Caco-2 (cell line): ENCODE measurements at regions of chr13 and their contacts with region 1.

Region 1: GRCh38 chr13:26946684-26947343 is 186.2 kb upstream of the GPR12 start:
- DNase-seq: peak; percentile 32 to 69
- H3K4me3 ChIP-seq: no peak overlapping the region
- H3K4me3 Mint-ChIP-seq: no peak overlapping the region
- H3K27ac Mint-ChIP-seq: no peak overlapping the region
- H3K4me1 ChIP-seq: peaks cover 48% of the 10 kb centered on the region
- H3K4me1 Mint-ChIP-seq: peaks cover 34% of the 10 kb centered on the region
- H3K27me3 ChIP-seq: no peaks in the 10 kb centered on the region
- H3K27me3 Mint-ChIP-seq: no peaks in the 10 kb centered on the region
- CTCF ChIP-seq: peak; percentile 87 to 97

Region 2: GRCh38 chr13:25744178-25744577 is 1202.6 kb before region 1 on chr13:
- CTCF ChIA-PET with region 1: no interaction called
- POLR2A ChIA-PET with region 1: no interaction called
- intact Hi-C with region 1: no loop called
- DNase-seq: no peak
- H3K4me3 ChIP-seq: no peak overlapping the region
- H3K4me3 Mint-ChIP-seq: no peak overlapping the region
- H3K27ac Mint-ChIP-seq: no peak overlapping the region
- H3K4me1 ChIP-seq: no peaks in the 10 kb centered on the region
- H3K4me1 Mint-ChIP-seq: no peaks in the 10 kb centered on the region
- H3K27me3 ChIP-seq: no peaks in the 10 kb centered on the region; the same call in 1 of the 2 replicates
- H3K27me3 Mint-ChIP-seq: peaks cover 36% of the 10 kb centered on the region
- CTCF ChIP-seq: no peak

Region 3: GRCh38 chr13:26957182-26957581 is 10.4 kb after region 1 on chr13:
- CTCF ChIA-PET with region 1: interaction called, 32 read pairs
- POLR2A ChIA-PET with region 1: interaction called, 13 read pairs
- intact Hi-C with region 1: loop called (anchors 1 kb)
- DNase-seq: peak; percentile 72 to 76
- H3K4me3 ChIP-seq: no peak overlapping the region
- H3K4me3 Mint-ChIP-seq: peak overlapping the region; percentile 38
- H3K27ac Mint-ChIP-seq: peak overlapping the region; percentile 90
- H3K4me1 ChIP-seq: peaks cover 91% of the 10 kb centered on the region
- H3K4me1 Mint-ChIP-seq: peaks cover 56% of the 10 kb centered on the region
- H3K27me3 ChIP-seq: no peaks in the 10 kb centered on the region
- H3K27me3 Mint-ChIP-seq: no peaks in the 10 kb centered on the region
- CTCF ChIP-seq: no peak

Region 4: DNA sequence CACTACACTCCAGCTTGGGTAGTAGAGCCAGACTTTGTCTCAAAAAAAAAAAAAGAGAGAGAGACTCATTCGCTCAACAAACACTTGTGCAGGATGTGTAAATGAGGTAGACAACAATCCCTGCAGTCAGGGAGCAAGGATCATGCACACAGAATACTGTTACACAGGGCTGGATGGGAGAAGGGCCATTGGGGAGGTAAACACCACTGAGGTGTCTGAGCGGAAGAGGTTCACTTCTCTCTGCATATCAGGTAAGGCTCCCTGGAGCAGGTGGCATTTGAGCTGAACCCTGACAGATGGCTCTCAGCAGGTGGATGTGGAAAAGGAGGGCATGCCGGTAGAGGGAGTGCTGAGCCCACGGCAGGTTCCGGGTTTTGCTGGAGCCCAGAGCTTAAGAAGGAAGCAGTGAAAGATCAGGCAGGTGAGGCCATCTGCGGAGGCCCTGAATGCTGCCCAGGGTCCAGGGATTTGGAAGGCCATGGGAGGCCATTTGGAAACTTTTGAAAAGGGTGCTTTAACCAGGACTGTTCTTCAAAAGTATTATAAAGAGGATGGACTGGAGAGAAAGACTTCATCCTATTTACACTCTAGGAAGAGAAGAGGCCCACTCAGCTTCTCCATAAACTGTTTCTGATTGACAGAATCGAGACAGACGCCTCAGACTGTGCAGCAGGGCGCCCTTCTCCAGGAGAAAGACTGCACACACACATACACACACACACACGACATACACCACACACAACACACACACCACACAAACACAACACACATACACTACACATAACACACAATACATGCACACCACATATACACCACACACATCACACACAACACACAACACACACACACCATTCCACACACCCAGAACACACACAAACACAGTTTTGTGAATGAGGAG is 25.4 kb after region 1 on chr13:
- CTCF ChIA-PET with region 1: interaction called, 20 read pairs
- POLR2A ChIA-PET with region 1: interaction called, 7 read pairs
- intact Hi-C with region 1: loop called (anchors 1 kb)
- DNase-seq: peak; percentile 76 to 81
- H3K4me3 ChIP-seq: no peak overlapping the region
- H3K4me3 Mint-ChIP-seq: peak overlapping the region; percentile 5
- H3K27ac Mint-ChIP-seq: peak overlapping the region; percentile 60
- H3K4me1 ChIP-seq: peaks cover 79% of the 10 kb centered on the region
- H3K4me1 Mint-ChIP-seq: peaks cover 72% of the 10 kb centered on the region
- H3K27me3 ChIP-seq: no peaks in the 10 kb centered on the region
- H3K27me3 Mint-ChIP-seq: no peaks in the 10 kb centered on the region
- CTCF ChIP-seq: peak; percentile 45 to 79

Region 5: GRCh38 chr13:26985285-26985878 is 38.6 kb after region 1 on chr13:
- CTCF ChIA-PET with region 1: interaction called, 72 read pairs
- POLR2A ChIA-PET with region 1: interaction called, 24 read pairs
- intact Hi-C with region 1: loop called (anchors 1 kb)
- DNase-seq: peak; percentile 80 to 83
- H3K4me3 ChIP-seq: no peak overlapping the region
- H3K4me3 Mint-ChIP-seq: no peak overlapping the region
- H3K27ac Mint-ChIP-seq: peak overlapping the region; percentile 30
- H3K4me1 ChIP-seq: peaks cover 49% of the 10 kb centered on the region
- H3K4me1 Mint-ChIP-seq: peaks cover 62% of the 10 kb centered on the region
- H3K27me3 ChIP-seq: no peaks in the 10 kb centered on the region
- H3K27me3 Mint-ChIP-seq: no peaks in the 10 kb centered on the region
- CTCF ChIP-seq: peak; percentile 65 to 92

Region 6: DNA sequence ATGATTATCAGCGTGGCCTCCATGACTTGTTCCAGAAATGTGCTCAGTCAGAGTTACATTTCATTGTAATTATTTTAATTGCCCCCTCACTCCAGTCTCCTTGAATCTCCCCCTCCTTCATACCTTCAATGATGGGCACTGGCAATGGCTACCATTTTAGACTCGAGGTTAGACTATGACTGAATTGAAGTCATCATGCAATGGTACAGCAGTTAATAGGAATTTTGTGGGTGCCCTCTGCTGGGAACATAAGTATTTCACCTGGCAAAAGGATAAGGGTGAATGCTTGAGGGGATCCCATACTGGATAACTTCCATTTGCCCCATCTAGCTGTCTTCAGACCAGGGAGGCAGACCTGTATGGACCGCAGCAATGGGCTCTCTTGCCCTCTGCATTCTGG is 257.0 kb after region 1 on chr13:
- CTCF ChIA-PET with region 1: interaction called, 13 read pairs
- POLR2A ChIA-PET with region 1: no interaction called
- intact Hi-C with region 1: no loop called
- DNase-seq: no peak
- H3K4me3 ChIP-seq: no peak overlapping the region
- H3K4me3 Mint-ChIP-seq: no peak overlapping the region
- H3K27ac Mint-ChIP-seq: no peak overlapping the region
- H3K4me1 ChIP-seq: peaks cover 5% of the 10 kb centered on the region
- H3K4me1 Mint-ChIP-seq: peaks cover 9% of the 10 kb centered on the region
- H3K27me3 ChIP-seq: no peaks in the 10 kb centered on the region
- H3K27me3 Mint-ChIP-seq: peaks cover 7% of the 10 kb centered on the region
- CTCF ChIP-seq: peak in 1 of 2 experiments; percentile 14

Region 7: DNA sequence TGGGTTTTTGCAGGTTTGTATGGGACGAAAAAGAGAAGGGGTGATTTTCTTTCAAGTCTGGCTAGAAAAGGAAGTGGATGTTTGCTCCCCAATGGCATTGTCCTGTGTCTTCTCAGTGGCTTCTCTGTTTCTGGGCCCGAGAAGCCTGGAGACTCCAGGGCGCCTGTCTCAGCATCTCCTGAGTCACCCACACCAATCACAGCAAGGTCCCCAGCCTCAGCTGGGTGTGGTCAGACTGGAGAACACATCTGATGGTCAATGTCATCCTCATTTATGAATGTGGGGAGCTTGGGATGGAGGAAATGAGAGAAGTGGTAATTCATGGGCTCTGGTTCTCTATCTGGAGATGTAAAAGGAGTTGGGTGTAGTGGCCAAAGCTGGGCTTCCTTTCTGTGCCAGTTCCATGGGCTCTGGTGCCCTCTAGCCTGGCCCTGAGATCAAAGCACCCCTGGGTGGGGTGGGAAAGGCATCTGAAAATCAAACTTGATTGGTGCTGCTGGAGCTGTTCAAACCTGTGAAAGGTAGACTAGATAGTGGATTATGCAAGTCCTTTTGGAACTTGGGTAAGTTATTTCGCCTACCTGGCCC is 337.2 kb after region 1 on chr13:
- CTCF ChIA-PET with region 1: interaction called, 10 read pairs
- POLR2A ChIA-PET with region 1: no interaction called
- intact Hi-C with region 1: no loop called
- DNase-seq: peak in 1 of 2 experiments; percentile 23
- H3K4me3 ChIP-seq: no peak overlapping the region
- H3K4me3 Mint-ChIP-seq: no peak overlapping the region
- H3K27ac Mint-ChIP-seq: no peak overlapping the region
- H3K4me1 ChIP-seq: no peaks in the 10 kb centered on the region
- H3K4me1 Mint-ChIP-seq: no peaks in the 10 kb centered on the region
- H3K27me3 ChIP-seq: no peaks in the 10 kb centered on the region
- H3K27me3 Mint-ChIP-seq: no peaks in the 10 kb centered on the region
- CTCF ChIP-seq: no peak

Region 8: GRCh38 chr13:27449936-27450828 is 503.4 kb after region 1 on chr13 and contains the start of gene MTIF3:
- CTCF ChIA-PET with region 1: no interaction called
- POLR2A ChIA-PET with region 1: no interaction called
- intact Hi-C with region 1: loop called (anchors 10 kb)
- DNase-seq: peak; percentile 98
- H3K4me3 ChIP-seq: peak within 1 kb of the TSS; percentile 71
- H3K4me3 Mint-ChIP-seq: peak within 1 kb of the TSS; percentile 73
- H3K27ac Mint-ChIP-seq: peak within 1 kb of the TSS; percentile 55
- H3K4me1 ChIP-seq: peaks cover 12% of the 10 kb centered on the region; the same call in 1 of the 2 replicates
- H3K4me1 Mint-ChIP-seq: peaks cover 14% of the 10 kb centered on the region
- H3K27me3 ChIP-seq: no peaks in the 10 kb centered on the region
- H3K27me3 Mint-ChIP-seq: no peaks in the 10 kb centered on the region
- CTCF ChIP-seq: peak in 1 of 2 experiments; percentile 26
- total RNA-seq, gene MTIF3: 41.8 and 51.5 TPM in 2 replicates